Activated naive CD8-positive, alpha-beta T cell treated with anti-CD3 and anti-CD28 coated beads, Interleukin-2, amount 10 ng/mL, durations not matched to agents 7 days and 5 days (primary cell): ENCODE measurements at regions of chr16 and their contacts with region 1.

Region 1: DNA sequence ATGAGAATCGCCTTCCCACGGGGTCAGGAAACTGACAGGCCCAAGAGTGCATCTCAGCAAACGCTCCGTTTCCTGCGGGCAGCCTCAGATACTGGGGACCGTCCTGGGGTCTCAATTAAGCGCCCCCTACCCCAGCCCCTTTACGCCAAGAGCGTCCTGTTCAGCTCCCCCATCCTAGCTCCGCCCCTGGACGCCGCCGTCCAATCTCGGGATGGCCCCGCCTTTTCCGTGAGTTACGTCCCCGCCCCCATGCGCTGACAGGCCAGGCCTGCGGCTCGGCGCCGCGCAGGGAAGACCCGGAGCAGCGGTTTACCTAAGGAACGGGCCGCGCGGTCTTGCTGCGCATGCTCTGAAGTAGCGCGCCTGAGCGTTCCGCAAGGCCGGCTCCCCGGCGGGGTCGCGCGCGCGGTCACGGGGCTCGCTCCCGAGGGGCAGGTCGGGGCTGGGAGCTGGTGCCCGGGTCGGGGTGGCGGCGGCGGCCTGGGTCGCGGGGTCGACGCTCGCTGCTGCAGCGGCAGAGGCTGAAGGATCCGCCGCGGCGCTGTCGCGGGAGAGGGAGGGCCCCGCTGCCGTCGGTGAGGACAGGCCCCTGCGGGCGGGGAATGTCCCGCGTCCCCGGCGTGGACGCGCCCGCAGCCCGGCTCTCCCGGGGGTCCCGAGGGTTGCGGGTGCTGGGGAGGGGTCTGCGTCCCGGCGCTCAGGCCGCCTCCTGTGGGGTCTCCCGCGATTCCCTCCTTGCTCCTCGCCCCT is at the start of gene FLYWCH1:
- DNase-seq: peak; percentile 97
- ATAC-seq: peak; percentile 98
- H3K4me3 Mint-ChIP-seq: peak within 1 kb of the TSS; percentile 93
- H3K27ac Mint-ChIP-seq: peak within 1 kb of the TSS; percentile 85
- H3K4me1 Mint-ChIP-seq: peaks cover 14% of the 10 kb centered on the region
- H3K27me3 Mint-ChIP-seq: peaks cover 5% of the 10 kb centered on the region
- total RNA-seq, gene FLYWCH1: 65.5 to 69.7 TPM

Region 2: DNA sequence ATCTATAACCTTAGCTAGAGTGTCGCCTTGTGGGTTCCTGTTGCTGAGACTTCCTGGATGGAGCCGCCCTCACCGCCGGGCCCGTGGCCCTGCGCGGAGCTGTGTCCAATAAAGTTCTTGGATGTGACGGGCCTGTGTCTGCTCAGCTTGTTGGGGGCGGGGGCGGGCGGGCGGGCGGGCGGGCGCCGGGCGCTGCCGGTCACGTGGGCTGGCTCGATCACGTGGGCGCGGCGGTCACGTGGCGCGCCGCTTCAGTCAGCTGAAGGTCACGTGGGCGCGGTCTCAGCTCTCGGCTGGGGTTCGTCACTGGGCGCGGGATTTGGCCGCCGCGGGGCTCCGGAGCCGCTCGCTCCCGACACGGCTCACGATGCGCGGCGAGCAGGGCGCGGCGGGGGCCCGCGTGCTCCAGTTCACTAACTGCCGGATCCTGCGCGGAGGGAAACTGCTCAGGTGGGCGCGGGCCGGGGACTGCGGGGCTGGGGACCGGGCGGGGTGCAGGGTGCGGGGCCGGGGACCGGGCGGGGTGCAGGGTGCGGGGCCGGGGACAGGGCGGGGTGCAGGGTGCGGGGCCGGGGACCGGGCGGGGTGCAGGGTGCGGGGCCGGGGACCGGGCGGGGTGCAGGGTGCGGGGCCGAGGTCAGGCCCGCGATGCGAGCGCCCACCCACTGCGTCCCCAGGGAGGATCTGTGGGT is 391.5 kb before region 1 on chr16 and contains the start of gene AMDHD2:
- POLR2A ChIA-PET with region 1: no interaction called
- DNase-seq: peak; percentile 92
- ATAC-seq: peak; percentile 64
- H3K4me3 Mint-ChIP-seq: peak within 1 kb of the TSS; percentile 83
- H3K27ac Mint-ChIP-seq: peak within 1 kb of the TSS; percentile 93
- H3K4me1 Mint-ChIP-seq: peaks cover 34% of the 10 kb centered on the region
- H3K27me3 Mint-ChIP-seq: no peaks in the 10 kb centered on the region
- total RNA-seq, gene AMDHD2: 74.0 to 75.4 TPM

Region 3: GRCh38 chr16:2883027-2883851 is 28.5 kb before region 1 on chr16 and contains the start of gene FLYWCH2:
- POLR2A ChIA-PET with region 1: interaction called, 31 read pairs
- DNase-seq: peak; percentile 100
- ATAC-seq: peak; percentile 87
- H3K4me3 Mint-ChIP-seq: peak within 1 kb of the TSS; percentile 86
- H3K27ac Mint-ChIP-seq: peak within 1 kb of the TSS; percentile 95
- H3K4me1 Mint-ChIP-seq: peaks cover 14% of the 10 kb centered on the region
- H3K27me3 Mint-ChIP-seq: peaks cover 3% of the 10 kb centered on the region
- total RNA-seq, gene FLYWCH2: 21.0 to 21.2 TPM